ENCODE measurements at regions of chr6 and their contacts with region 1.

Region 1: DNA sequence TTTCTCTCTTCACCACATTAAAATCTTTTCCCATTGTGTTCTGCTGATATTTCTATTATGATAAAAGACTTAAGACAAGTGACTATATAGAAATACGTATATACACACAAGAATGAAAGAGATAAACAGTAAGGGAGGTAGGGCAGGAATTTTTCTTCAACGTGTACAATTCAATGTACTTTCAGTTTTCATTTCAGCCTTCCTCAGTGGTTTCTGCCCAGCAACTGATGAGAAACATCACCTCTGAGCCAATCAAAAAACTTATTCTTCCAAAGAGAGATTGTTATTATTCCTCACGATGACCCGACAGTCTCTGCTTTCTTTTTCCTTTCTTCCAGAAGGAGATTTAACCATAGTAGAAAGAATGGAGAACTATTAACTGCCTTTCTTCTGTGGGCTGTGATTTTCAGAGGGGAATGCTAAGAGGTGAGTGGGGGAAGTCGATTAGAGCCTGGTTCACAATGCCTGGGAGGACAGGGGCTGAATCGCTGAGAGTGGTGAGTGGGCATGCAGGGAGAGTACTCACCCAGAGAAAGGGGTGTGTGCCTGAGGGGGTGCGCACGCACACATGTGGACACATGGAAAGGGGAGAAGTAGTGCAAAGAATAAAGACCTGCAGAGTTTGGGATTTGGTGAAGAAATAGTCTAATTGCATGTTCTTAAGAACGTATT is at the start of gene BTN3A1:
- DNase-seq: peak; percentile 82
- ATAC-seq: peak; percentile 96
- H3K4me3 ChIP-seq: peak within 1 kb of the TSS; percentile 85
- H3K27ac ChIP-seq: 0 out of 2 replicates have a peak within 1 kb of the TSS, but pooled peaks have one; percentile 24
- H3K4me1 ChIP-seq: peaks cover 7% of the 10 kb centered on the region; the same call in 1 of the 2 replicates
- H3K27me3 ChIP-seq: no peaks in the 10 kb centered on the region
- CTCF ChIP-seq: no peak
- total RNA-seq, gene BTN3A1: 4.5 and 5.4 TPM in 2 replicates

Region 2: GRCh38 chr6:25899123-25899522 is 503.0 kb before region 1 on chr6:
- CTCF ChIA-PET with region 1: no interaction called
- POLR2A ChIA-PET with region 1: no interaction called
- intact Hi-C with region 1: no loop called
- DNase-seq: no peak
- ATAC-seq: no peak
- H3K4me3 ChIP-seq: no peak overlapping the region
- H3K27ac ChIP-seq: no peak overlapping the region
- H3K4me1 ChIP-seq: no peaks in the 10 kb centered on the region
- H3K27me3 ChIP-seq: peaks cover 21% of the 10 kb centered on the region
- CTCF ChIP-seq: no peak

Region 3: DNA sequence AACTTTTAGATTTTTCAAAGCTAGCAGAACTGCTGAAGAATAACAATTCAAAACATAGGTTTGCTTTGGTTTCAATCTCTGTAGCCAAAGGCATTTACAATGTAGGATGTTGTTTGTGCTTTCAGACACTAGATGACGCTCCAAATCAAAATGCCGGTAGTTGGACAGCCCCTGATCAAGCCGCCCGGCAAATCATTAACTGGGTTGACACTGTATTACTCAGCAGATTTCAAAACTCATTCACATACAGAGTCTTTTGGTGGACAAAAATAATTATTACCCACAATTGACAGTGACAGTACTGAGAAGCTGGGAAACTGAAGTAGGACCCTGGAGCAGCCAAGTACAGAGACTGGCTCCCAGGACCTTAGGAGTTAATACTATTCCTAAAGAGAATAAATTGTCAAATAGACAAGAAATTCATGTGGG is 336.2 kb before region 1 on chr6:
- CTCF ChIA-PET with region 1: no interaction called
- POLR2A ChIA-PET with region 1: no interaction called
- intact Hi-C with region 1: no loop called
- DNase-seq: peak; percentile 91
- ATAC-seq: peak; percentile 86
- H3K4me3 ChIP-seq: no peak overlapping the region; the same call in 1 of the 2 replicates
- H3K27ac ChIP-seq: peak overlapping the region; percentile 32
- H3K4me1 ChIP-seq: peaks cover 9% of the 10 kb centered on the region
- H3K27me3 ChIP-seq: no peaks in the 10 kb centered on the region
- CTCF ChIP-seq: peak; percentile 93

Region 4: DNA sequence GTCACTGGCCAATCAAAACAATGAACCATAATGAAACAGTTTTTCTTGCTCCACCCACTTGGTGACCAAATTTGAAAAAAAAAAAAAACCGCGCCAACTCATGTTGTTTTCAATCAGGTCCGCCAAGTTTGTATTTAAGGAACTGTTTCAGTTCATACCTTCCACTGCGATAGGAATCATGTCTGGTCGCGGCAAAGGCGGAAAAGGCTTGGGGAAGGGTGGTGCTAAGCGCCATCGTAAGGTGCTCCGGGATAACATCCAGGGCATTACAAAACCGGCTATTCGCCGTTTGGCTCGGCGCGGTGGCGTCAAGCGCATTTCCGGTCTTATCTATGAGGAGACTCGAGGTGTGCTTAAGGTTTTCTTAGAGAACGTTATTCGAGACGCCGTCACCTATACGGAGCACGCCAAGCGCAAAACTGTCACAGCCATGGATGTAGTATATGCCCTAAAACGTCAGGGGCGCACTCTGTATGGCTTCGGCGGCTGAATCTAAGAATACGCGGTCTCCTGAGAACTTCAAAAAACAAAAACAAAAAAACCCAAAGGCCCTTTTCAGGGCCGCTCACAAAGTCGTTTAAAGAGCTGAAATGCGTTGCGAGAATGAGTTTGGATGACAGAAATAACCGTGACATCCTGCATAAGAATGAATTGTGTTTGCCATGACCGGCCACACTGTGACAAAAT is 298.2 kb before region 1 on chr6:
- CTCF ChIA-PET with region 1: no interaction called
- POLR2A ChIA-PET with region 1: no interaction called
- intact Hi-C with region 1: no loop called
- DNase-seq: peak; percentile 97
- ATAC-seq: peak; percentile 81
- H3K4me3 ChIP-seq: peak overlapping the region; percentile 68
- H3K27ac ChIP-seq: peak overlapping the region; percentile 84
- H3K4me1 ChIP-seq: peaks cover 28% of the 10 kb centered on the region
- H3K27me3 ChIP-seq: no peaks in the 10 kb centered on the region
- CTCF ChIP-seq: peak; percentile 46; the same call in 1 of the 2 replicates

Region 5: DNA sequence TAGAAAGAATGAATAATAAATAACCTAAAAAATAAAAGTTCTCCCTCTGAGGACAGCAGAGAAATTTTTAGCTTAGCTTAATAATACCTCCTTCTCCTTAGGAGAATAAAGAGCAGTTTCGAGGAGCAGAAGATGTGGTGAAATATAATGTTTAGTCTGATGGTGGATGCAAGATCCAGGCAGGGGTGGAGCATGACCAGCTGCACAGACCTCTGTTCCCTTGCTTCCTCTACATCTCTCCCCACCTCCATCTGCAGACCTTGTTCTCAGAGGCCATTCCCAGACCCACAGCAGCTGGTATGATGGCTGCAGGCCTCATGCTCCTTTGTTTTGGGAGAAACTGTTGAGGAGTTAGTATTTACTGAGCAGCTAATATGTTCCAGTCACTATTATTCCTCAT is 35.6 kb before region 1 on chr6:
- CTCF ChIA-PET with region 1: no interaction called
- POLR2A ChIA-PET with region 1: no interaction called
- intact Hi-C with region 1: loop called (anchors 5 kb)
- DNase-seq: no peak
- ATAC-seq: no peak
- H3K4me3 ChIP-seq: no peak overlapping the region
- H3K27ac ChIP-seq: no peak overlapping the region
- H3K4me1 ChIP-seq: peaks cover 13% of the 10 kb centered on the region
- H3K27me3 ChIP-seq: no peaks in the 10 kb centered on the region
- CTCF ChIP-seq: no peak

Region 6: GRCh38 chr6:26439657-26440056 is 37.5 kb after region 1 on chr6:
- CTCF ChIA-PET with region 1: no interaction called
- POLR2A ChIA-PET with region 1: no interaction called
- intact Hi-C with region 1: loop called (anchors 2 kb)
- DNase-seq: no peak
- ATAC-seq: 0 out of 2 replicates have a peak, but pooled peaks have one; percentile 3
- H3K4me3 ChIP-seq: peak overlapping the region; percentile 75
- H3K27ac ChIP-seq: peak overlapping the region; percentile 67
- H3K4me1 ChIP-seq: peaks cover 13% of the 10 kb centered on the region
- H3K27me3 ChIP-seq: no peaks in the 10 kb centered on the region
- CTCF ChIP-seq: no peak